ENCODE measurements at regions of chr6 and their contacts with region 1.

Region 1: DNA sequence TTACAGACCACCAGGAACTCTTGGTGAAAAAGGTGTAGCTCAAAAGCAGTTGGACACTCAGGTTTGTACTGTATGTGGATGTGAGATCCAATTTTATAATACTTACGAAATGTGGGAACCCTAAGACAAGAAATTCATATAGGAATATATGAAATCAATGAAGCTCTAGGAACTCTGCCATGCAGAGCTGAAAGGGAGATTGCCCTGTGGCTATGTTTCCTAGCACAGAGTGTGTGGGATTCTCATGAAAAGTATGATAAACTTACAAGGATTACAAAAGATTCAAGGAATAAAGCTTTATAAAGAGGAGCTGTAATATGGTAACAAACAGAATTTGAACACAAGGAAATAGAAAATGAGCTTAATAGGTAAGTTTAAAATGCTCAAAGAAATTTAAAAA is 205.7 kb upstream of the FAM83B start:
- DNase-seq: no peak
- H3K4me3 Mint-ChIP-seq: no peak overlapping the region
- H3K27ac Mint-ChIP-seq: no peak overlapping the region
- H3K4me1 Mint-ChIP-seq: no peaks in the 10 kb centered on the region
- H3K27me3 Mint-ChIP-seq: no peaks in the 10 kb centered on the region
- CTCF ChIP-seq: no peak

Region 2: GRCh38 chr6:55266896-55267295 is 626.0 kb after region 1 on chr6:
- CTCF ChIA-PET with region 1: interaction called, 12 read pairs
- intact Hi-C with region 1: no loop called
- DNase-seq: no peak
- H3K4me3 Mint-ChIP-seq: no peak overlapping the region
- H3K27ac Mint-ChIP-seq: no peak overlapping the region
- H3K4me1 Mint-ChIP-seq: no peaks in the 10 kb centered on the region
- H3K27me3 Mint-ChIP-seq: no peaks in the 10 kb centered on the region
- CTCF ChIP-seq: no peak